ENCODE measurements at regions of chr11 and their contacts with region 1.

Region 1: GRCh38 chr11:111429066-111429506 is 50.0 kb upstream of the POU2AF1 start:
- DNase-seq: no peak
- ATAC-seq: peak; percentile 98
- H3K4me3 ChIP-seq: no peak overlapping the region
- H3K27ac ChIP-seq: no peak overlapping the region
- H3K4me1 ChIP-seq: peaks cover 6% of the 10 kb centered on the region; the same call in 1 of the 2 replicates
- H3K27me3 ChIP-seq: no peaks in the 10 kb centered on the region
- CTCF ChIP-seq: peak; percentile 82 to 96 (median 92)
- EP300 ChIP-seq: no peak
- POLR2A ChIP-seq: no peak
- RAD21 ChIP-seq: peak; percentile 87

Region 2: GRCh38 chr11:111283945-111284481 is 145.1 kb before region 1 on chr11:
- CTCF ChIA-PET with region 1: interaction called, 680 read pairs
- POLR2A ChIA-PET with region 1: interaction called, 10 read pairs
- RAD21 ChIA-PET with region 1: interaction called, 322 read pairs
- SMC1A ChIA-PET with region 1: interaction called, 455 read pairs
- in situ Hi-C with region 1: loop called (anchors 5 kb)
- intact Hi-C with region 1: loop called (anchors 1 kb)
- DNase-seq: no peak
- ATAC-seq: peak; percentile 30; the same call in 2 of the 3 replicates
- H3K4me3 ChIP-seq: no peak overlapping the region
- H3K27ac ChIP-seq: no peak overlapping the region
- H3K4me1 ChIP-seq: no peaks in the 10 kb centered on the region
- H3K27me3 ChIP-seq: peaks cover 0 to 3% of the 10 kb centered on the region in 2 experiments; a peak in 2 of 4 replicates
- CTCF ChIP-seq: no peak
- EP300 ChIP-seq: no peak
- POLR2A ChIP-seq: no peak
- RAD21 ChIP-seq: no peak

Region 3: GRCh38 chr11:111299101-111300026 is 129.7 kb before region 1 on chr11:
- CTCF ChIA-PET with region 1: interaction called, 26 read pairs
- POLR2A ChIA-PET with region 1: no interaction called
- RAD21 ChIA-PET with region 1: interaction called, 16 read pairs
- SMC1A ChIA-PET with region 1: interaction called, 5 read pairs
- in situ Hi-C with region 1: no loop called
- intact Hi-C with region 1: no loop called
- DNase-seq: no peak
- ATAC-seq: peak; percentile 88
- H3K4me3 ChIP-seq: peak overlapping the region; percentile 71
- H3K27ac ChIP-seq: no peak overlapping the region
- H3K4me1 ChIP-seq: no peaks in the 10 kb centered on the region
- H3K27me3 ChIP-seq: peaks cover 0 to 7% of the 10 kb centered on the region in 2 experiments; a peak in 3 of 4 replicates
- CTCF ChIP-seq: peak; percentile 32 to 65 (median 44); a peak in 5 of 6 replicates
- EP300 ChIP-seq: no peak
- POLR2A ChIP-seq: no peak
- RAD21 ChIP-seq: peak; percentile 36; the same call in 1 of the 2 replicates

Region 4: DNA sequence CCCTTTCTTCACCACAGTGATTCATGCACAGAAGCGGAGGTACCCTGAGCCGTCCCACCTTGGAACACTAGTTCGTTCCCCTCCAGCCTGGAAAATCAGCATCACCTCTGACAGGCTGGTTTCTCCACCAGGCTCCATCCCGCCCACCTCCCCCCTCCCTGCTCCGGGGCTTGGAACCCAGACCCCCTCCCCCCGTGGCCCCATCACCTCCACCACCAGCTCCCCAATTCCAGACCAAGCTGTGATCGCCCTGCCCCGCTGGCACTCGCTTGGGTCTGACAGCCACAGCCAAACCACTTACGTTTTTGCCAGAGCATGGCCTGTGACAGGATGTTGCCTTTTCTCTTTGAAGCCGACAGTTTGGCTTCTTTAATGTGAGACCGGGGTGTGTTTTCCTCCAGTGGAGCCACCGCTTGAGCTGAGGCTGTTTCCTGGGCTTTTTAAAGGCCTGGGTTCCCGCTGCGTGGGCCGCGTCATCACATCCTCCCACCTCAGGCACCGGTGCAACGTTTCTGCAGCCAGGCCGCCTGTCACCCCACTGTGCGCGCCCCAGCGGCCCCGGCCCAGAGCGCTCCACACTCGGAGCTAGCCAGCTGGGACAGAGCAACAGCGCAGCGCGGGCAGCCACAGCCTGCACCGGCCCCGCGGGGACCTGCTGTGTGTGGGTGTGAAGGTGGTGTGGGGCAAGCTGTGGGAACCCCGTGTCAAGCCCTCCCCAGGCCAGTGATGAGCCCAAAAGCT is 50.1 kb before region 1 on chr11 and contains the start of gene POU2AF1:
- CTCF ChIA-PET with region 1: interaction called, 181 read pairs
- POLR2A ChIA-PET with region 1: interaction called, 3 read pairs
- RAD21 ChIA-PET with region 1: interaction called, 657 read pairs
- SMC1A ChIA-PET with region 1: interaction called, 972 read pairs
- in situ Hi-C with region 1: no loop called
- intact Hi-C with region 1: no loop called
- DNase-seq: peak; percentile 82
- ATAC-seq: peak; percentile 76
- H3K4me3 ChIP-seq: peak within 1 kb of the TSS; percentile 69
- H3K27ac ChIP-seq: peak within 1 kb of the TSS; percentile 97
- H3K4me1 ChIP-seq: peaks cover 17% of the 10 kb centered on the region
- H3K27me3 ChIP-seq: no peaks in the 10 kb centered on the region
- CTCF ChIP-seq: no peak
- EP300 ChIP-seq: no peak; a peak in 1 of 4 replicates
- POLR2A ChIP-seq: peak; percentile 96
- RAD21 ChIP-seq: no peak
- polyA plus RNA-seq, gene POU2AF1: 13.1 to 92.7 TPM

Region 5: DNA sequence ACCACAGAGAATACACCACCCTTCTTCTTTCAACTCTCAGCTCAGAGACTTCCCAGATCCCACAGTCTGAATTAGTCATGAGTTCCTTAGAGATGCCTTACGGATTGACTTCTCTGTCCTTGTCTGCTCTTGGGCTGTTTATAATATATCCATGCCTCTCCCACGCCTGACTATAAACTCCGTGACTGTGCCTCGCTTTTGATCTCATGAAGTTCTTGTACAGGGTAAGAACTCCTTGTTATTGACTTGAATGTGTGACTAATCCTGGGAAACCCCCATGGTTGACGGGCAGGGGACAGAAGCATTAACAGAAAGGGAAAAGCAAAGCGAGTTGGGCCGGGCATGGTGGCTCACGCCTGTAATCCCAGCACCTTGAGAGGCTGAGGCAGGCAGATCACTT is 12.4 kb after region 1 on chr11:
- CTCF ChIA-PET with region 1: interaction called, 72 read pairs
- POLR2A ChIA-PET with region 1: interaction called, 13 read pairs
- RAD21 ChIA-PET with region 1: interaction called, 31 read pairs
- SMC1A ChIA-PET with region 1: interaction called, 50 read pairs
- in situ Hi-C with region 1: no loop called
- intact Hi-C with region 1: no loop called
- DNase-seq: no peak
- ATAC-seq: peak; percentile 18; the same call in 2 of the 3 replicates
- H3K4me3 ChIP-seq: no peak overlapping the region
- H3K27ac ChIP-seq: no peak overlapping the region
- H3K4me1 ChIP-seq: no peaks in the 10 kb centered on the region; the same call in 1 of the 2 replicates
- H3K27me3 ChIP-seq: no peaks in the 10 kb centered on the region
- CTCF ChIP-seq: no peak
- EP300 ChIP-seq: no peak
- POLR2A ChIP-seq: no peak
- RAD21 ChIP-seq: no peak

Region 6: GRCh38 chr11:111499483-111499882 is 70.4 kb after region 1 on chr11:
- CTCF ChIA-PET with region 1: no interaction called
- POLR2A ChIA-PET with region 1: no interaction called
- RAD21 ChIA-PET with region 1: no interaction called
- SMC1A ChIA-PET with region 1: no interaction called
- in situ Hi-C with region 1: no loop called
- intact Hi-C with region 1: no loop called
- DNase-seq: no peak
- ATAC-seq: no peak
- H3K4me3 ChIP-seq: no peak overlapping the region
- H3K27ac ChIP-seq: no peak overlapping the region
- H3K4me1 ChIP-seq: no peaks in the 10 kb centered on the region
- H3K27me3 ChIP-seq: peaks cover 0 to 2% of the 10 kb centered on the region in 2 experiments; a peak in 2 of 4 replicates
- CTCF ChIP-seq: no peak
- EP300 ChIP-seq: no peak
- POLR2A ChIP-seq: no peak
- RAD21 ChIP-seq: no peak

Region 7: GRCh38 chr11:111860257-111860656 is 431.2 kb after region 1 on chr11:
- CTCF ChIA-PET with region 1: no interaction called
- POLR2A ChIA-PET with region 1: no interaction called
- RAD21 ChIA-PET with region 1: no interaction called
- SMC1A ChIA-PET with region 1: no interaction called
- in situ Hi-C with region 1: no loop called
- intact Hi-C with region 1: no loop called
- DNase-seq: no peak
- ATAC-seq: no peak
- H3K4me3 ChIP-seq: no peak overlapping the region
- H3K27ac ChIP-seq: no peak overlapping the region
- H3K4me1 ChIP-seq: no peaks in the 10 kb centered on the region
- H3K27me3 ChIP-seq: no peaks in the 10 kb centered on the region
- CTCF ChIP-seq: no peak
- EP300 ChIP-seq: no peak
- POLR2A ChIP-seq: no peak
- RAD21 ChIP-seq: no peak

Measured in GM12878 (cell line).